GM10248 (cell line): ENCODE measurements at regions of chr2 and their contacts with region 1.

Region 1: DNA sequence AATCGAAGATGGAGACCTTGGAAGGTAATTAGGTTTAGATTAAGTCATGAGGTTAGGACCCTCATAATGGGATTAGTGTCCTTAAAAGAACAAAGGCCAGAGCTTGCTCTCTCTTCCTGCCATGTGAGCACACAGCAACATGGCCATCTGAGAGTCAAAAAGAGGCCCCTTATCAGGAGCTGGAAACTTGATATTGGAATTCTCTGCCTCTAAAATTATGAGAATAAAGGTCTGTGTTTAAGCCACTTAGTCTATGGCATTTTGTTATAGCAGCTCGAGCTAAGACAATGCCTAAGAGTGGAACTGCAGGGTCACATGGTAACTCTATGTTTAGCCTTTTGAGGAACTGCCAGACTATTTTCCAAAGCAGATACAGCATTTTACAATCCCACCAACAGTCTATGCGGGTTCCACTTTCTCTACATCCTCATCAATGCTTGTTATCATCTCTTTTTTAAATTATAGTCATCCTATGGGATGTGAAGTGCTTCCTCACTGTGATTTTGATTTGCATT is 42.4 kb downstream of the THADA start:
- DNase-seq: no peak
- CTCF ChIP-seq: no peak

Region 2: GRCh38 chr2:43569921-43570320 is 16.5 kb after region 1 on chr2:
- CTCF ChIA-PET with region 1: interaction called, 12 read pairs
- POLR2A ChIA-PET with region 1: no interaction called
- DNase-seq: peak; percentile 34
- CTCF ChIP-seq: no peak

Region 3: GRCh38 chr2:43576981-43577892 is 23.8 kb after region 1 on chr2:
- CTCF ChIA-PET with region 1: interaction called, 17 read pairs
- POLR2A ChIA-PET with region 1: no interaction called
- DNase-seq: peak; percentile 34
- CTCF ChIP-seq: peak; percentile 63

Region 4: DNA sequence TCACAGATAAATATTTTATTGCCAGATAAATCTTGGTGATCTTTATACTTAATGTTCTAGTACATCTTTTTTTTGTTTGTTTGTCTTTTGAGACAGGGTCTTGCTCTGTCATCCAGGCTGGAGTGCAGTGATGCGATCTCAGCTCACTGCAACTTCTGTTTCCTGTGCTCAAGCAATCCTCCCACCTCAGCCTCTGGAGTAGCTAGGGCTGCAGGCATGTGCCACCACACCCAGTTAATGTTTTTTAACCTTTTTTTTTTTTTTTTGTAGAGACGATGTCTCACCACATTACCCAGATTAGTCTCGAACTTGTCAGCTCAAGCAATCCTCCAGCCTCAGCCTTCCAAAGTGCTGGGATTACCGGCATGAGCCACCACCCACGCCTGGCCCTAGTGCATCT is 132.0 kb after region 1 on chr2:
- CTCF ChIA-PET with region 1: no interaction called
- POLR2A ChIA-PET with region 1: no interaction called
- DNase-seq: no peak
- CTCF ChIP-seq: no peak